ENCODE measurements at regions of chr10 and their contacts with region 1.

Region 1: GRCh38 chr10:79068562-79069324 is at the start of gene ZMIZ1:
- DNase-seq: peak; percentile 93
- H3K4me3 ChIP-seq: peak within 1 kb of the TSS; percentile 89
- H3K27ac ChIP-seq: peak within 1 kb of the TSS; percentile 60
- H3K4me1 ChIP-seq: peaks cover 27% of the 10 kb centered on the region
- CTCF ChIP-seq: peak; percentile 47
- total RNA-seq, gene ZMIZ1: 18.9 and 20.4 TPM in 2 replicates

Region 2: DNA sequence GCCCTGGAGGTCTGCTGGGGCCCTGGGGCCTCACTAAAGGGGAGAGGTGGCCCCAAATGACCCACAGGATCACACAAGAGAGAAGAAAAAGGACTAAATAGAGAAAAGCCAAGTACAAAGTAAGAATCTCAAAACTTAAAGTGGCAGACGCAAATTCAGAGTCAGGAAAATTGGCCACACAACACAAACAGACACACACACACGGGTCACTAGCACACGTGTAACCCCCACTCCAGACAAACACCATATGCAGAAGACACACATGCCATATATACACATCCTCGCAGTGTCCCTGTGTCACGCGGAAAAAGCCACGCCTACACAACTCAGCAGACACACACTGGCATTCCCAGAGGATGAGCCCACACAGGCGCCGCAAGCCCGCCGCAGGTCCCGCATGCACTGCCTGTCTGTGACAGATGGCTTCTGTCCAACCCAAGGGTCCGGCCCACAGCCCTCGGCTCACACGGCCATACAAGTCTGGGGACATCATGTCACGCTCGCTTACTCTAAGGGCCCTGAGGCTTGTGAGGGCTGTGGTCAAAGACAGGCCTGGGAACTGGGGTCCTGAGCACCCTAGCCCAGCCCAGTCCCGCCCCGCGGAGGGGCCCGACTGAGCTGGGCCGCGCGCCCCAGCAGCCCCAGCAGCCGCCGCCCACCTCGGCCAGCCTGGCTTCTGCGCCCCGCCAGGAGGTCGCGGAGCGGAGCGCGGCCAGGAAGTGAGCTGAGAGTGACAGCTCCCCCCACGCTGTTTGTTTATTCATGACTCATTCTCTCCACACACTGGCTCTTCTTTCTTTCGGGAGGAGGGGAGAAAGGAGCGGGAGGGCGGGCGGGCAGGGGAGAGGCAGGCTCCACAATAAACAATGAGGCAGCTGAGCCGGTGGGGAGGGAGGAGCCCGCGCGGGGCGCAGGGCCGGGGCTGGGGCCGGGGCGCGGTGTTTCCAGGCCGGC is 95.5 kb before region 1 on chr10:
- CTCF ChIA-PET with region 1: no interaction called
- POLR2A ChIA-PET with region 1: no interaction called
- intact Hi-C with region 1: loop called (anchors 5 kb)
- DNase-seq: peak; percentile 88
- H3K4me3 ChIP-seq: peak overlapping the region; percentile 66
- H3K27ac ChIP-seq: no peak overlapping the region
- H3K4me1 ChIP-seq: peaks cover 19% of the 10 kb centered on the region
- CTCF ChIP-seq: no peak

Region 3: GRCh38 chr10:79022565-79023230 is 46.0 kb before region 1 on chr10:
- CTCF ChIA-PET with region 1: no interaction called
- POLR2A ChIA-PET with region 1: interaction called, 7 read pairs
- intact Hi-C with region 1: loop called (anchors 1 kb)
- DNase-seq: peak; percentile 79
- H3K4me3 ChIP-seq: peak overlapping the region; percentile 60
- H3K27ac ChIP-seq: peak overlapping the region; percentile 32
- H3K4me1 ChIP-seq: peaks cover 16% of the 10 kb centered on the region
- CTCF ChIP-seq: no peak

Region 4: GRCh38 chr10:79101560-79102497 is 33.1 kb after region 1 on chr10:
- CTCF ChIA-PET with region 1: interaction called, 3 read pairs
- POLR2A ChIA-PET with region 1: interaction called, 3 read pairs
- intact Hi-C with region 1: loop called (anchors 1 kb)
- DNase-seq: peak; percentile 57
- H3K4me3 ChIP-seq: peak overlapping the region; percentile 27
- H3K27ac ChIP-seq: peak overlapping the region; percentile 46
- H3K4me1 ChIP-seq: peaks cover 78% of the 10 kb centered on the region
- CTCF ChIP-seq: no peak

Region 5: GRCh38 chr10:79112881-79113431 is 44.2 kb after region 1 on chr10:
- CTCF ChIA-PET with region 1: no interaction called
- POLR2A ChIA-PET with region 1: no interaction called
- intact Hi-C with region 1: no loop called
- DNase-seq: no peak
- H3K4me3 ChIP-seq: no peak overlapping the region
- H3K27ac ChIP-seq: no peak overlapping the region
- H3K4me1 ChIP-seq: peaks cover 25% of the 10 kb centered on the region
- CTCF ChIP-seq: no peak

Region 6: DNA sequence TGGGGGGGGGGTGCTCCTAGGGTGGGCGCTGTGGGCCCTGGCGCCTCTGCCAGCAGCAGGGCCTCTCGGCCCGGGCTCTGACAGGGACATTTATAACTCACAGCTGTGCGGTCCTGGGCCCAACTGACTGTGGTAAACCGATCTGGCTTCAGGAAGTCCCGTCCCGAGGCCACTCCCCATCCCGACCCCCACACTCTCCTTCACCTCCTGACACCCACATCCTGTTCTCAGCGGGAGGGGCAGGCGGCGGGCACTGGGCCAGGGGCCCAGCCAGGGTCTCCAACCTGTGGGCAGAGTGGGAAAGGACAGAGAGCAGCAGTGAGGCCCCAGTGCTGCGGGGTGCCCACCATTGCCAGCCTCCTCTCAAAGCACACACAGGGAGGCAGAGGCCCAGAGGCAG is 69.1 kb after region 1 on chr10:
- CTCF ChIA-PET with region 1: no interaction called
- POLR2A ChIA-PET with region 1: interaction called, 3 read pairs
- intact Hi-C with region 1: loop called (anchors 2 kb)
- DNase-seq: peak; percentile 85
- H3K4me3 ChIP-seq: peak overlapping the region; percentile 67
- H3K27ac ChIP-seq: peak overlapping the region; percentile 75
- H3K4me1 ChIP-seq: peaks cover 61% of the 10 kb centered on the region
- CTCF ChIP-seq: no peak